ENCODE measurements at regions of chr19 and their contacts with region 1.

Region 1: GRCh38 chr19:48993175-48994034 is at the starts of genes GYS1 and RUVBL2:
- DNase-seq: peak; percentile 99
- ATAC-seq: peak; percentile 93
- H3K4me3 Mint-ChIP-seq: peak within 1 kb of the TSS; percentile 89
- H3K27ac Mint-ChIP-seq: peak within 1 kb of the TSS; percentile 97
- H3K4me1 Mint-ChIP-seq: peaks cover 41% of the 10 kb centered on the region
- H3K27me3 Mint-ChIP-seq: no peaks in the 10 kb centered on the region
- total RNA-seq, gene GYS1: 44.0 to 65.5 TPM
- total RNA-seq, gene RUVBL2: 124 to 125 TPM

Region 2: GRCh38 chr19:48965040-48965805 is 28.2 kb before region 1 on chr19 and contains the start of gene FTL:
- CTCF ChIA-PET with region 1: interaction called, 31 read pairs
- DNase-seq: peak; percentile 96
- ATAC-seq: peak; percentile 70
- H3K4me3 Mint-ChIP-seq: peak within 1 kb of the TSS; percentile 99
- H3K27ac Mint-ChIP-seq: peak within 1 kb of the TSS; percentile 97
- H3K4me1 Mint-ChIP-seq: peaks cover 67% of the 10 kb centered on the region
- H3K27me3 Mint-ChIP-seq: no peaks in the 10 kb centered on the region
- total RNA-seq, gene FTL: 1,380 to 1,403 TPM

Region 3: DNA sequence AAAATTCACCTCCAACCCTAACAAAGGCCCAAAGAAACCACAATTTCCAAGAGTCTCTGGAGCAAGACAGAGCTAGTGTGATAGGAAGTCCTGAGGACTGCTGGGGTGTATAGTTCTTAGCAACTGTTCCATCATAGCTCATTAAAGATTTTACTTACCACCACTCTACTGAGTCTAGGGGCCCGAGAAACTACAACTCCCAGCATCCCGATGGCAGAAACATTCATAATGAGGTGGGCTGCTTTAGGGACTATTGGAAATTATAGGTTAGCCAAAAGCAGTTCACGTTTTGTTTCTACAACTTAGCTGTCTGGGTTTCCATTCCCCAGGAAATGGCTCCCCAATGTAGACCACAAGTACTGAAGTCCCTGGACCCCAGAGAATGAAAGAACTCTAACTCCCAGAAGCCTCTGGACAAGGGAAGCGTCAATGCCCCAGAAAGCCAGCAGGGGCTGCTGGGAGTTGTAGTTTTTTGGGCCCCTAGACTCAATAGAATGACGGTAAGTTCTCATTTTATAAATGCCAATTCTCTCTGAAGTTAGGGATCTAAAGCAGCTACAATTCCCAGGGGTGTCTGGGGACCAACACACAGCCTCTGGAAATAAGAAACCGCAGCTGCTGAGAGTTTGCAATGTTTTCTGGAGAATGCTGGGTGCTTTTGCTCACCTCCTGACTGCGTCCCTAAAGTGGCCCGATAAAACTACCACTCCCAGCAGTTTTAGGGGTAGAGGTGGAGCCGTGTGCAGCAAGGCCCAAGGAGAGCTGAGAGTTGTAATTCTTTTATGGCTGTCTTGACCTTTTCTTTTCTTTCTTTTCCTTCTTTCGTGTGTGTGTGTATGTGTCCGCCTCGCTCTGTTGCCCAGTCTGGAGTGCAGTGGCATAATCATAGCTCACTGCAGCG is 17.2 kb before region 1 on chr19:
- CTCF ChIA-PET with region 1: interaction called, 45 read pairs
- DNase-seq: peak; percentile 70
- ATAC-seq: peak; percentile 54
- H3K4me3 Mint-ChIP-seq: no peak overlapping the region
- H3K27ac Mint-ChIP-seq: no peak overlapping the region
- H3K4me1 Mint-ChIP-seq: peaks cover 16% of the 10 kb centered on the region
- H3K27me3 Mint-ChIP-seq: no peaks in the 10 kb centered on the region

Region 4: DNA sequence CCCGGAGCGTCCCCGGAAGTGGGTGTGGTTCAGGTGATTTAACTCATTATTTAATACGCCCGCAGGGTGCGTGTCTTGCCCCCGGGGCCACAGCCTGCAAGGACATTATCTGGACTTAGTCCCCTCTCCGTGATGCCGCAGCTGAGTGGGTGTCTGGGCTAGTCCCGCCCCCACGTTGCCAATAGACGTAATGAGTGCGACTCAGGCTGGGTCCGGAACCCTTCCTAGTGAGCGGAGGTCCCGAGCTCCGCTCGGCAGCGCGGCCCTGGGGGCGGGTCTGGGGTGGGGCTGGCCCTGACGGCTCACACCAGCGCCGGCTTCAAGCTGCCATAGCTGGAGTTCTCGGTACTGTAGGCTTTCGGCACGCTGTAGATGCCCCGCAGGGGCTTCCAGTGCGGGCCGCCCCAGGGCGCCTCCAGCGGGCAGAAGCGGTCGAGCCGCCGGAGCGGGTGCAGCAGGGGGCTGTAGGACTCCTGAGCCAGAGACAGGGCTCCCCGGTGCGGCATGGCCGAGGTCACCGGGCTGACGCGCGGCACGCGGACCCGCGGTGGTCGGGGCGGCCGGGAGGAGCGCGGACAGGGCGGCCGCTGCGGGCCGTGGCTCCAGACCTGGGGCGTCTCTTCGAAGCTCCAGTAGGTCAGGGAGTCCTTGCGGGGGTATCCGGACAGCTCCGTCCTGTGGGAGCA is 24.4 kb after region 1 on chr19:
- CTCF ChIA-PET with region 1: interaction called, 47 read pairs
- DNase-seq: peak; percentile 79
- ATAC-seq: peak; percentile 87
- H3K4me3 Mint-ChIP-seq: peak overlapping the region; percentile 65
- H3K27ac Mint-ChIP-seq: no peak overlapping the region
- H3K4me1 Mint-ChIP-seq: peaks cover 34% of the 10 kb centered on the region
- H3K27me3 Mint-ChIP-seq: peaks cover 14% of the 10 kb centered on the region

Region 5: DNA sequence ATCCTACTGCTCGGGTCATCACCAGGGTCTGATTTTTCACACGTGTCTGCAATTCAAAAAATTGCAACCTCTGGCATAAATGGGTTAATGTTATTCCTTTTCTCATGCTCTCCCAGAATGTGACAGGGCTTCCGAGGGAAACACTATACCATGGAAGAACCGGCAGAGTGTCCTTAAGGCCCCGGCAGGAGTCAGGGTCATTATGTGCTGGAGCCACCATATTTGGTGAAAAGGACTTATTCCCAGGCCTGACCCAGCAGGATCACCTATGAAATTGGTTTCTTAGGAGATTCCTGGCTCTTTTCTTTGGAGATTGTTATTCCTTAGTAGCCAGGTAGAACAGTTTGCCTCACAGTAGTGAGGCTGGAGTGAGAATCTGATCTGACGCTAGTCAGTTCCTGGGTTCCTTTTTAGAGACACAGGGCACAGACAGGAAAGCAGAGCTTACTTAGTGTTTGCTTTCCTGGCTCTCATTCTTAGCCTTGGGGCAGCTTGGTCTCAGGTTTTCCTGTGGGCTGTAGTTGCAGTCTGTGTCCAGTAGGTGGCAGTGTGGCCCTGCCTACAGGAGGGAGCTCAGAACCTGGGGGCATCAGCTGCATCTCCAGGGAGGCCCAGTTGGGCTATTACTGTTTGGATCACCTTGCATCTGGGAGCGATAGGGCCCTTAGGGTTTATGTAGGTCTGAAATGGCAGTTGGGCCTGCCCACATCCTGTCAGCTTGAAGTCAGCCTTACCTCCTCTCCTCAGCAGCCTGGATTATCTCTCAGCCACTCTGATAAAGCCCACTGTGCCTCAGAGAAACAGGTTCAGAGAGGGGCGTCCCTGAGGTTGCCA is 104.3 kb after region 1 on chr19:
- CTCF ChIA-PET with region 1: interaction called, 15 read pairs
- DNase-seq: peak; percentile 84
- ATAC-seq: peak; percentile 87
- H3K4me3 Mint-ChIP-seq: no peak overlapping the region
- H3K27ac Mint-ChIP-seq: peak overlapping the region; percentile 80
- H3K4me1 Mint-ChIP-seq: peaks cover 24% of the 10 kb centered on the region
- H3K27me3 Mint-ChIP-seq: no peaks in the 10 kb centered on the region

Region 6: GRCh38 chr19:49200238-49200862 is 206.9 kb after region 1 on chr19:
- CTCF ChIA-PET with region 1: interaction called, 13 read pairs
- DNase-seq: no peak
- ATAC-seq: no peak
- H3K4me3 Mint-ChIP-seq: no peak overlapping the region
- H3K27ac Mint-ChIP-seq: no peak overlapping the region
- H3K4me1 Mint-ChIP-seq: peaks cover 6% of the 10 kb centered on the region
- H3K27me3 Mint-ChIP-seq: peaks cover 7% of the 10 kb centered on the region